ENCODE measurements at regions of chr11 and their contacts with region 1.

Region 1: GRCh38 chr11:12087075-12088004 is 23.1 kb upstream of the MICAL2 start:
- DNase-seq: peak; percentile 71 to 80
- ATAC-seq: peak; percentile 60
- H3K4me3 ChIP-seq: peak overlapping the region; percentile 30 to 68
- H3K27ac ChIP-seq: peak overlapping the region; percentile 100
- H3K4me1 ChIP-seq: peaks cover 0 to 9% of the 10 kb centered on the region in 2 donors
- H3K27me3 ChIP-seq: no peaks in the 10 kb centered on the region

Region 2: GRCh38 chr11:11948242-11948947 is 138.9 kb before region 1 on chr11:
- intact Hi-C with region 1: no loop called
- DNase-seq: no peak
- ATAC-seq: no peak
- H3K4me3 ChIP-seq: no peak overlapping the region
- H3K27ac ChIP-seq: no peak overlapping the region
- H3K4me1 ChIP-seq: no peaks in the 10 kb centered on the region
- H3K27me3 ChIP-seq: no peaks in the 10 kb centered on the region

Region 3: GRCh38 chr11:11987503-11988022 is 99.8 kb before region 1 on chr11:
- intact Hi-C with region 1: no loop called
- DNase-seq: no peak
- ATAC-seq: no peak
- H3K4me3 ChIP-seq: no peak overlapping the region
- H3K27ac ChIP-seq: peak overlapping the region; percentile 32 to 59
- H3K4me1 ChIP-seq: peaks cover 3 to 13% of the 10 kb centered on the region in 2 donors
- H3K27me3 ChIP-seq: no peaks in the 10 kb centered on the region

Region 4: DNA sequence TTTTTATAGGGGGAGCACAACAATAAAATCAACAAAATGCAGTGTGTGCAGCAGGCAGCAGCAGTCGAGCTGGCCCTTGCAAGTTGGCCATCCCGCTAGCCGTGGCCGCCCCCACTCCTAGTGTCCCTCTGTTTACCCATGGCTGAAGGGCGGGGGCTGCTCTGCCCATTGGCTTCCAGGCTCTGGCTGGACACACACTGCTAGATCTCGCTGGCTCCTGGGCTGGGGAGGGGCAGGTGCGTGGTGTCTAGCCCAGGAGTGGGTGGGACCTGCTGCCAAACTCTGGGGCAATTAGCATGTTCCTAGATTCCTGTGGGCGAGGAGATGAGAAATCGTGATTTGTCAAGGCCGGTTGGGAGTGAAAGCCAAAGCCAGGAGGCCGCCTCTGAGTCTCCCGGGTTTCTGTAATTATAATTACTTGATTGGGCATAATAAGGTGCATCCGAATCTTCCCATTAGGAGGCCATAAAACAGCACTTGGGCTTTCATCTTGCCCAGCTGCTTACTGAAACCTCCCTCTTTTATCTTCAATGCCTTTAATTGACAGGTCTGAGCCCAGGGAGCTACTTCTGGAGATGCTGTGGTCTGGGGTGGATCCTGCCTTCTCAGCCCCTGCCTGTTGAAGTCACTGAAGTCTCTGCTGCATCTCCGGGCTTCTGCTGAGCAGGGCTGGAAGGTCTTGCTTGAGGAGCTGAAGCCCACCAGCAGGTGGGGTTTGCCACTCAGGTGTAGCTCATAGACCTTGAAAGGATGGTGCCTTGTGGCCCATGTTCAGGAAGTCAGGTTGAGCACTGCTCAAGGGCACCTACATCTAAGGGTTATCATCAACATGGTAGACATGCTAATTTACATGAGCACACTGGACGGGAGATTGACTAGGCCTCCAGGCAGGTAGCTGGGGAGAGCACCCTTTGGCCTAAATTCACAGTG is 34.4 kb before region 1 on chr11:
- intact Hi-C with region 1: loop called in 1 of 2 experiments (anchors 5 kb)
- DNase-seq: peak in 1 of 2 donors; percentile 54
- ATAC-seq: no peak
- H3K4me3 ChIP-seq: no peak overlapping the region
- H3K27ac ChIP-seq: no peak overlapping the region
- H3K4me1 ChIP-seq: peaks cover 0 to 3% of the 10 kb centered on the region in 2 donors
- H3K27me3 ChIP-seq: no peaks in the 10 kb centered on the region

Region 5: DNA sequence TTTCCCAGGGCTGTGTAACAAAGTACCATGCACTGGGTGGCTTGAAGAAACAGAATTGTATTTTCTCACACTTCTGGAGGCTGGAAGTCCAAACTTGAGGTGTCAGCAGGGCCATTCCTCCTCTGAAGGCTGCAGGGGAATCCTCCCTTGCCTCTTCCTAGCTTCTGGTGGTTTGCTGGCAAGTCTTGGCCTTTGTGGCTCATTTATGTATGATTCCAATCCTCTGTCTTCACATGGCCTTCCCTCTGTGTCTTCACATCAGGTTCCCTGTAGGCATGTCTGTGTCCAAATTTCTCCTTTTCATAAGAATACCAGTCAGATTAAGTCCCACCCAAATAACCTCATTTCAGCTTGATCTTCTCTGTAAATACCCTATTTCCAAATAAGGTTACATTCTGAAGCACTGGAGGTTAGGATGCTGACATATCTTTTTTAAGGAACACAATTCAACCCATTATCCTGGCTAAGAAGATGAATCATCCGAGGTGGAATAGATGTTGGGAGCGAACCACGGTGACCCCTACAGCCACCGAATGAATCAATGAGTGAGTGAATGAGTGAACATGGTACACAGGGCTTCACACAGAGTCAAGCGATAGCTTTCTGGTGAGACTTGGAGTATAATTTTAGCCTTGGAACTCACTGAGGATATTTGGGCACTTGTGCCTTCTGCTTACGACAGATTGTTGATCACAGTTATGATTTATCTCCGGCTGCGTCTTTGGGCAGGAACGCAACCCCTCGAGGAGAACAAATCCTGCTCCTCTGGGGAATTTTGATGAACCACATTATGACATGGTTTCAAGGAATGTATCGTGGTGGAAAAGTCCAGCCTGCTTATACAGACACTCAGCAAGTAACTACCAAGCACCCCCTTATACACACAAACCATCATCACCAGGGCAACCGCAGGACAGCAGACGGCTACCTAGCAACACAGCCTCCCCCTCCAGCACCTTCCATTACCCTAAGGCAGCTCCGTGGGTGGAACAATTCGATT is 11.2 kb before region 1 on chr11:
- intact Hi-C with region 1: loop called in 1 of 2 experiments (anchors 2 kb)
- DNase-seq: peak; percentile 77 to 87
- ATAC-seq: peak; percentile 78
- H3K4me3 ChIP-seq: no peak overlapping the region
- H3K27ac ChIP-seq: peak overlapping the region; percentile 95 to 98
- H3K4me1 ChIP-seq: peaks cover 2 to 8% of the 10 kb centered on the region in 2 donors
- H3K27me3 ChIP-seq: no peaks in the 10 kb centered on the region

Region 6: DNA sequence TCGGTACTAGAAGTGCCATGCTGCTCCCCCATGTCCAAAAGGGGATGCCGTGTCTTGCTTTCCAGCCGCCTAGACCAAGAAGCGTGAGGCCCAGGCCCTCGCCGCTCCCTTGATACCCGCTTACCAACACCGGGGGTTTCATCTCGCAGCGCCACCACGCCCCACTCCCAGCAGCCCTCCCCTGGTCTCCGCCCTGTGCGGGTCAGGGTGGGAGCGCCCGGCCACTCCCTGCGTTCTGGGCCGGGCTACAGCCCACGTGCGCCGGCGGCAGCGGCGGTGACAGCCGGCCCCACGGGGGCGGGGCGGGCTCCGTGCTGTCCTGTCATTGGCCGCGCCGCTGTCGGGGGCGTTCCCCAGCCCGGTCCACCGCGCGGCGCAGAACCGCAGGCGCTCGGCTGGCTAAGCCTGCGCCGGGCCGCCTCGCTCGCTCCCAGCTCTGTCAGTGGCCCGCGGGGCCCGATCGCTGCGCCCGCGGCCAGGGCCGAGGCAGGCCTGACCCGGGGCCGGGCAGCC is 22.9 kb after region 1 on chr11 and contains the start of gene MICAL2:
- intact Hi-C with region 1: loop called in 1 of 2 experiments (anchors 2 kb)
- DNase-seq: peak; percentile 94 to 96
- ATAC-seq: peak; percentile 95
- H3K4me3 ChIP-seq: peak within 1 kb of the TSS; percentile 63 to 69
- H3K27ac ChIP-seq: peak within 1 kb of the TSS; percentile 83 to 90
- H3K4me1 ChIP-seq: peaks cover 2 to 5% of the 10 kb centered on the region in 2 donors
- H3K27me3 ChIP-seq: no peaks in the 10 kb centered on the region
- total RNA-seq, gene MICAL2: 315 to 605 TPM

Region 7: GRCh38 chr11:12149672-12150225 is 62.4 kb after region 1 on chr11:
- intact Hi-C with region 1: no loop called
- DNase-seq: no peak
- ATAC-seq: peak; percentile 5
- H3K4me3 ChIP-seq: no peak overlapping the region
- H3K27ac ChIP-seq: peak overlapping the region in 1 of 2 donors; percentile 74
- H3K4me1 ChIP-seq: no peaks in the 10 kb centered on the region
- H3K27me3 ChIP-seq: no peaks in the 10 kb centered on the region

Region 8: GRCh38 chr11:12235947-12236743 is 148.8 kb after region 1 on chr11:
- intact Hi-C with region 1: loop called (anchors 10 kb)
- DNase-seq: peak in 1 of 2 donors; percentile 68
- ATAC-seq: peak; percentile 53
- H3K4me3 ChIP-seq: no peak overlapping the region
- H3K27ac ChIP-seq: peak overlapping the region; percentile 98 to 99
- H3K4me1 ChIP-seq: peaks cover 3 to 7% of the 10 kb centered on the region in 2 donors
- H3K27me3 ChIP-seq: no peaks in the 10 kb centered on the region

Measured in aorta (tissue), 5 donors.